ENCODE measurements at regions of chr14 and their contacts with region 1.

Region 1: DNA sequence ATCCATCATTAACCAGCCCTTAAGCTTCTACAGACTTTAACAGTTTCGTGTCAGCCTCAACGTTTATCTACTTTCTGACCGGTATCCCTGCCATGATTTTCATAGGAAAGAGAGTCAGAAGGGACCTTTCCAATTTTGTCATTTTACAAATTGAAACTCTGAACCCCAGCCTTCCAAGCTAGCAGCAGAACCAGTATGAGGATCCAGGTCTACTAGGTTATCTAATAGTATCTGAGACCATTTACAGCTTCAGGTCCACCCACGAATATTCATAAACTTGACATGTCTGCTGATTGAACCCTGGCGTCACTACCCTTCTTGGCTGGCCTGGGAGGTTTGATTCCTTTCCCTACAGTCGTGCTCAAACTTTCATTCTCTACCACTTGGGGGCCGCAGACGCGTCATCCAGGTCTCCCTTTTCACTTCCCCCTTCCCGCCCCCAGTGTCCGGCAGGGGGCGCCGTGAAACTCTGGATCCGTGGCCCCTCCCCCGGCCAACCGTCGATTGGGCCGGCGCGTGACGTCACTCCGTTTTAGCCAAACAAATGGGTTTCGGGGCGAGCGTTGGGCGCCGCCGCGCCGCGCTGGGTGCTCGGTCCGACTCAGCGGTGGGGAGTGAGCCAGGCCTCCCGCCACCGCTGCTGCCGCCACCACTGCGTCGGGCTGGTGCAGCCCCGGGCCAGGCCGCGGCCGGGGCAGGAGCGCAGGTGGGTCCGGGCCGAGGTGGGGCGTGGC is at the start of gene FBXO34:
- DNase-seq: peak; percentile 97
- H3K4me3 ChIP-seq: peak within 1 kb of the TSS; percentile 88 to 100 (median 96)
- H3K27ac ChIP-seq: peak within 1 kb of the TSS; percentile 93
- H3K4me1 ChIP-seq: peaks cover 24% of the 10 kb centered on the region
- H3K27me3 ChIP-seq: no peaks in the 10 kb centered on the region
- CTCF ChIP-seq: peak; percentile 96 to 100
- total RNA-seq, gene FBXO34: 16.1 to 30.8 TPM

Region 2: DNA sequence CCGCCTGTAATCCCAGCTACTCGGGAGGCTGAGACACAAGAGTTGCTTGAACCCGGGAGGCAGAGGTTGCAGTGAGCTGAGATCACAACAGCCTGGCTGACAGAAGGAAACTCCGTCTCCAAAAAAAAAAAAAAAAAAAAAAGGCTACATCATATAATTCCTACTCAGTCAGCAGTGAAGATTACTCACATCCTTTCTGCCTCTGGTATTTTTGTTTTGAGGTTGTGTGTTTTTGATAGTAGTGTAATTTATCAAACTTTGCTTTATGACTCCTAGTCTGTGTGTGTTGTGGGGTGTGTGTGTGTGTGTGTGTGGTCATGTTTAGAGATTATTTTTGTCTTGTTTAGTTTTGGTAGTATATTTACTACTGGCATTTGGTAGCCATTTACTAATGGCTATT is 49.8 kb before region 1 on chr14:
- CTCF ChIA-PET with region 1: no interaction called
- dilution Hi-C with region 1: loop called (anchors 10 kb)
- in situ Hi-C with region 1: no loop called
- intact Hi-C with region 1: no loop called
- DNase-seq: peak; percentile 76
- H3K4me3 ChIP-seq: no peak overlapping the region
- H3K27ac ChIP-seq: no peak overlapping the region
- H3K4me1 ChIP-seq: peaks cover 30% of the 10 kb centered on the region
- H3K27me3 ChIP-seq: no peaks in the 10 kb centered on the region
- CTCF ChIP-seq: no peak

Region 3: DNA sequence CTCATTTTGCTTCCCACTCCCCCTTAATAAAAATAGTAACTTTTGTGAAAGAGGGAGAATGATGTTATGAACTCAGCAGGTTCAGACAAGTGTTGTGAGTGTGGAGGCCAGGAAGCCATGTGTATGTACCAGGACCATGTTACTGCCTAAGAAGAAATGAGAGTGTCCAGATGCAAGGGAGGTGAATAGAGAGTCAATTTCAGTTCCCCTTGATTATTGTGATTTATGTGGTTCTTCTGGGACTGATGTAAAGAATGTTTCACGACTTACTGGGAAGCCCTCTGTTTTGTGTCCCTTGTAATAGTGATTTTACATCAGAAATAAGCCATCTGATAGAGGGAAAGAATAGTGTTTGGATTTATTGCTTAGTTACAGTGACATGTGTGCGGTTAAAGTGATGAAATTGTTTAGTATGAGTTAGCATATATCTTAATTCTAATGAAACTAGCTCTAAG is 32.7 kb after region 1 on chr14:
- CTCF ChIA-PET with region 1: no interaction called
- dilution Hi-C with region 1: no loop called
- in situ Hi-C with region 1: no loop called
- intact Hi-C with region 1: loop called (anchors 1 kb)
- DNase-seq: peak; percentile 14
- H3K4me3 ChIP-seq: no peak overlapping the region
- H3K27ac ChIP-seq: peak overlapping the region; percentile 44
- H3K4me1 ChIP-seq: peaks cover 27% of the 10 kb centered on the region
- H3K27me3 ChIP-seq: no peaks in the 10 kb centered on the region
- CTCF ChIP-seq: no peak

Region 4: DNA sequence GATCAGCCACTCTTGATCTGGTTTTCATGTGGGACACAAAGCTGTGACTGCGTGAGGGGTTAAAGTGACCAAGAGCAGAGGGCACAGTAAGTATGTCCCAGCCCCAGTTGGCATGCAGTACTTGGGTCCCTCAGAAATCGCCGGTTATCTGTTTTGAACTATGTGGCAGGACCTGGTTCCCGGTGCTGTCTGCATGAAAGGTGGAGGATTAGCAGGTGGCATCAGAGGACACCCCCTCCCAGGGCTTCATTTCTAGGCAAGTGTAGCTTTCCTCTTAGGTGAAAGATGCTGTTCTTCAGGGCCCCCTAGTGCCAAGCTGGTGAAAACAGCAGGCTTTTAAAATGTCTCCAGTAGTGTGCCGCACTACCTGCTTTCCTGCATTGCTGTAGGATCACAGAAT is 83.5 kb after region 1 on chr14:
- CTCF ChIA-PET with region 1: interaction called, 16 read pairs
- dilution Hi-C with region 1: loop called (anchors 5 kb)
- in situ Hi-C with region 1: no loop called
- intact Hi-C with region 1: loop called (anchors 1 kb)
- DNase-seq: peak; percentile 45
- H3K4me3 ChIP-seq: no peak overlapping the region
- H3K27ac ChIP-seq: no peak overlapping the region
- H3K4me1 ChIP-seq: peaks cover 8% of the 10 kb centered on the region
- H3K27me3 ChIP-seq: no peaks in the 10 kb centered on the region
- CTCF ChIP-seq: peak; percentile 55 to 76

Region 5: DNA sequence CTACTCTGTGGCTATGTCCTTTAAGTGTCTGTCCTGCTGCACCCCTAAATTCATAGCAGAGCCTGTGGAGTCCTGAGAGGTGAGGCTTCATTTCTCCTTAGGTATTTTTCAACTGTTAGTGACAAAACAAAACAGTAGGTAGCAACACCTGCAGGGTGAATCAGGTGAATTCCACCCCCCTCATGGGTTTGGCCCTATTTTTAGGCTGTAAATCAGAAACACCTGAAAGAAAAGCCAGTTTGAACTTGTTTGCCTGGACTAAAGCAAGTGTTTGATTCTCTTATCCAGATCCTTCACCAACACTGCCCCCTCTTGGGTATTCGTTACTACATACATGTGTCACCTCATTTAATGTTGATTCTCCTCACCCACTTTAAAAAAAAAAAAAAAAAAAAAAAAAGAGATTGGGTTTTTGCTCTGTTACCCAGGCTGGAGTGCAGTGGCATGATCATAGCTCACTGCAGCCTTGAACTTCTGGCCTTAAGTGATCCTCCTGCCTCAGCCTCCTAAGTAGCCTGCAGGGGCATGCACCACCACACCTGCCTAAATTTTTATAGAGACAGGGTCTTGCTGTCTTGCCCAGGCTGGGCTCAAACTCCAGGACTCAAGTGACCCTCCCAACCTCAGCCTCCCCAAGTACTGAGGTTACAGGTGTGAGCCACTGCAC is 159.2 kb after region 1 on chr14:
- CTCF ChIA-PET with region 1: no interaction called
- dilution Hi-C with region 1: no loop called
- in situ Hi-C with region 1: no loop called
- intact Hi-C with region 1: loop called (anchors 1 kb)
- DNase-seq: peak; percentile 87
- H3K4me3 ChIP-seq: no peak overlapping the region
- H3K27ac ChIP-seq: no peak overlapping the region
- H3K4me1 ChIP-seq: peaks cover 15% of the 10 kb centered on the region
- H3K27me3 ChIP-seq: no peaks in the 10 kb centered on the region
- CTCF ChIP-seq: peak; percentile 35 to 65

Measured in mammary epithelial cell (primary cell).